B cell (primary cell): ENCODE measurements at regions of chr13 and their contacts with region 1.

Region 1: GRCh38 chr13:46595136-46595886 is 42.3 kb downstream of the LRCH1 start:
- DNase-seq: peak; percentile 80
- ATAC-seq: peak; percentile 72
- H3K4me3 ChIP-seq: peak overlapping the region in 4 of 5 experiments; percentile 9 to 53 (median 28)
- H3K4me3 Mint-ChIP-seq: peak overlapping the region; percentile 59
- H3K27ac ChIP-seq: peak overlapping the region; percentile 67 to 69
- H3K27ac Mint-ChIP-seq: peak overlapping the region; percentile 73
- H3K4me1 ChIP-seq: peaks cover 96 to 97% of the 10 kb centered on the region in 2 donors
- H3K4me1 Mint-ChIP-seq: peaks cover 93% of the 10 kb centered on the region
- H3K27me3 ChIP-seq: no peaks in the 10 kb centered on the region
- H3K27me3 Mint-ChIP-seq: no peaks in the 10 kb centered on the region
- CTCF ChIP-seq: no peak

Region 2: DNA sequence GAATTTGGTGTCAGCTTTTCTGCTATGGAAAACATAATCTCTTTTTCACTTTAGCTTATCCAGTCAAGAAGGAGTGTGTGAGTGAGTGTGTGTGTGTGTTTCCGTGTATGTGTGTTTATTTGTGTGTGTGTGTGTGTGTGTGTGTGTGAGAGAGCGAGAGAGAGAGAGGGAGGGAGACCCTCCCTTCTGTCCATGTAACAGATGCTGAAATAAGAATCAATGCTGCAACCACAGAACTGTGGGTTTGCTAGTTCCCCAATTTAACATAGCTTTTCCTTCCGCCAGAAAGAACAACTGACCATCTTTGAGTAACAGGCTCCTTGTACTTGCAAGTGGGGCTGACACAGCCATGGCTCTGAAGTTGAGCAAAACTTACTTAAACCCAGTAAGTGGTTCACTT is 418.6 kb before region 1 on chr13:
- CTCF ChIA-PET with region 1: no interaction called
- POLR2A ChIA-PET with region 1: no interaction called
- intact Hi-C with region 1: loop called (anchors 10 kb)
- DNase-seq: peak; percentile 83
- ATAC-seq: peak; percentile 61
- H3K4me3 ChIP-seq: peak overlapping the region; percentile 22 to 99 (median 39)
- H3K4me3 Mint-ChIP-seq: peak overlapping the region; percentile 80
- H3K27ac ChIP-seq: peak overlapping the region; percentile 79 to 91
- H3K27ac Mint-ChIP-seq: peak overlapping the region; percentile 90
- H3K4me1 ChIP-seq: peaks cover 68 to 71% of the 10 kb centered on the region in 2 donors
- H3K4me1 Mint-ChIP-seq: peaks cover 73% of the 10 kb centered on the region
- H3K27me3 ChIP-seq: no peaks in the 10 kb centered on the region
- H3K27me3 Mint-ChIP-seq: no peaks in the 10 kb centered on the region
- CTCF ChIP-seq: no peak

Region 3: GRCh38 chr13:46382224-46382623 is 213.1 kb before region 1 on chr13:
- CTCF ChIA-PET with region 1: no interaction called
- POLR2A ChIA-PET with region 1: no interaction called
- intact Hi-C with region 1: loop called (anchors 5 kb)
- DNase-seq: peak; percentile 77
- ATAC-seq: peak; percentile 46
- H3K4me3 ChIP-seq: peak overlapping the region; percentile 14 to 90 (median 74)
- H3K4me3 Mint-ChIP-seq: peak overlapping the region; percentile 73
- H3K27ac ChIP-seq: peak overlapping the region; percentile 84 to 97
- H3K27ac Mint-ChIP-seq: peak overlapping the region; percentile 90
- H3K4me1 ChIP-seq: peaks cover 66 to 72% of the 10 kb centered on the region in 2 donors
- H3K4me1 Mint-ChIP-seq: peaks cover 60% of the 10 kb centered on the region
- H3K27me3 ChIP-seq: no peaks in the 10 kb centered on the region
- H3K27me3 Mint-ChIP-seq: no peaks in the 10 kb centered on the region
- CTCF ChIP-seq: no peak

Region 4: DNA sequence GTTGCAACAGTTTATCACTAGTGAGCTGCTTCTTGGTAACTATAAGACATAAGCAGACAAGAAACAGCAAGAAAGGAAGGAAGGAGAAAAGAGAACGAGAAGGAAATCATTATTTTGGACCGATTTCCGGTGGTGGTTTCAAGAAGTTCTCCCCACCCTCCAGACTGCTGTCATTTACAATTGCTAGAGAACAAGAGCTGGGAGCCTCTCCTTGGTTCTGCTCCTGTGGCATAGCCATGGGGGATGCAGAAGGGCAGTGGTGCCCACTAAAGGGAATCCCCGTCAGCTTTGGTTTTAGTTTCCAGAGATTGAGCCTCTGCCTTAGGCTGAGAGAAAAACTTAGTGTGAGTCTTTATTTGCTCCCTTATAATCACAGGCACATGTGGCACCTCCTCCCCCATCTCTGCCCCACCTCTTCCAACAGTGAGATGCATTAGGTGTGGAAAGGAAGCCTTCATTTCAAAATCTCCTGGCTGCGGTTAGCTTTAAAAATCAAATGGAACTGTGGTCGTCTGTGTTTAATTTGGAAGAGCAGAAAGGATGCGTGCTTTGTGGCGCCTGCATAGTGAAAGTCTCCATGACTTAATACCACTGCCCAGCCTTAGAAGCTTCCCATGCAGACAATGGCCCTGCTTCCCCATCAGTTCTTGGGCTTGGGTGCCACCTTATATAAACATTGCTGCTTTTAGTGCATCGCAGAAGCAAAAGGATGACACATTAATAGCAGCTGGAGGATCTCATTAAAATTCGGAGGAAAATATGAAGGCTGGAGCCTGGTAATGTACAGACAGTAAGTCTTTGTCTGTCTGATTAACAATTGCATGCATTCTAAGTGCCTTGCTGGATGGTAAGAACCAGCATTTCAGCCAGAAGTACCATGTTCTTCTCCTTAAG is 17.4 kb before region 1 on chr13:
- CTCF ChIA-PET with region 1: interaction called, 7 read pairs
- POLR2A ChIA-PET with region 1: interaction called, 8 read pairs
- intact Hi-C with region 1: loop called (anchors 2 kb)
- DNase-seq: peak; percentile 47
- ATAC-seq: peak; percentile 25
- H3K4me3 ChIP-seq: peak overlapping the region in 1 of 5 experiments; percentile 45
- H3K4me3 Mint-ChIP-seq: peak overlapping the region; percentile 61
- H3K27ac ChIP-seq: peak overlapping the region; percentile 43 to 68
- H3K27ac Mint-ChIP-seq: peak overlapping the region; percentile 73
- H3K4me1 ChIP-seq: peaks cover 72 to 75% of the 10 kb centered on the region in 2 donors
- H3K4me1 Mint-ChIP-seq: peaks cover 86% of the 10 kb centered on the region
- H3K27me3 ChIP-seq: no peaks in the 10 kb centered on the region
- H3K27me3 Mint-ChIP-seq: no peaks in the 10 kb centered on the region
- CTCF ChIP-seq: no peak

Region 5: GRCh38 chr13:46605825-46606554 is 10.7 kb after region 1 on chr13:
- CTCF ChIA-PET with region 1: interaction called, 3 read pairs
- POLR2A ChIA-PET with region 1: interaction called, 4 read pairs
- intact Hi-C with region 1: loop called (anchors 1 kb)
- DNase-seq: peak; percentile 72
- ATAC-seq: peak; percentile 44
- H3K4me3 ChIP-seq: peak overlapping the region in 1 of 5 experiments; percentile 18
- H3K4me3 Mint-ChIP-seq: peak overlapping the region; percentile 66
- H3K27ac ChIP-seq: peak overlapping the region; percentile 26 to 74
- H3K27ac Mint-ChIP-seq: peak overlapping the region; percentile 79
- H3K4me1 ChIP-seq: peaks cover 76 to 80% of the 10 kb centered on the region in 2 donors
- H3K4me1 Mint-ChIP-seq: peaks cover 89% of the 10 kb centered on the region
- H3K27me3 ChIP-seq: no peaks in the 10 kb centered on the region
- H3K27me3 Mint-ChIP-seq: no peaks in the 10 kb centered on the region
- CTCF ChIP-seq: no peak

Region 6: DNA sequence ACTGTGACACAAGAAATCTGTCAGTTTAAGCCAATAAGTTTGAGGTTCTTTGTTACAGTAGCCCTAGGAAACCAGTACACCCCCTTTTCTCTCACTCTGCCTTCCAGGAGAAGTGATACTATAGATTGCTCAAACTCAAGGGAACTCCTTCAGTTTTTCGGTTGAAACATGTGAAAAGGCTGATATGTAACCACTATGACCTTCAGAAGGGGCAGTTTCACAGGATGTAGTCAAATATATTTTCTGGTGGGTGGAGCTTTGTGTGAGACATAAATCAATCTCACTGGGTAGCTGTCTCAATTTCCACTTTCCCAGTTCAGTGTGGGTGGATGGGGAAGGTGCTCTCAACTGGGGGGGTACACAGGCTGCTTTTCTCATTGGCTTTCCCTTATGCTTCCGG is 259.9 kb after region 1 on chr13:
- CTCF ChIA-PET with region 1: no interaction called
- POLR2A ChIA-PET with region 1: no interaction called
- intact Hi-C with region 1: no loop called
- DNase-seq: no peak
- ATAC-seq: no peak
- H3K4me3 ChIP-seq: no peak overlapping the region
- H3K4me3 Mint-ChIP-seq: no peak overlapping the region
- H3K27ac ChIP-seq: no peak overlapping the region
- H3K27ac Mint-ChIP-seq: no peak overlapping the region
- H3K4me1 ChIP-seq: no peaks in the 10 kb centered on the region
- H3K4me1 Mint-ChIP-seq: no peaks in the 10 kb centered on the region
- H3K27me3 ChIP-seq: peaks cover 0 to 4% (median 0%) of the 10 kb centered on the region in 4 experiments
- H3K27me3 Mint-ChIP-seq: peaks cover 16% of the 10 kb centered on the region
- CTCF ChIP-seq: no peak

Region 7: DNA sequence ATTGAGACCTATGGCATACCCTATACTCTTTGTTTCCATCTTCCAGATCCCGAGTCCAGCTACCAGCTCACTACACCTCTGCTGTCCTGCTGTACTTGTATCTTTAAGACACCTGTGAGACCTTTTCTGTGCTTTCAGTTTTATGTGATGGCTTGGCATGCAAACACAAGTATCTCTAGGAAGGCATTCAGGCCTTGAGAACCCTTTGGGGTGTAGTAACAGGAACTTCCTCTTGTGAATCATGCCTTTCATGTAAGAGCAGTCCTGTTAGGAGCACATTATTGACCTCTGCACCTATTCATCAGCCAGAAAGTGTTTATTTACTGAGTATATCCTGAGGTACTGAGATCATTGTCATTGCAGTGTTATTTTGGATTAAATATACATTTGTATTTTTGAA is 388.6 kb after region 1 on chr13:
- CTCF ChIA-PET with region 1: no interaction called
- POLR2A ChIA-PET with region 1: no interaction called
- intact Hi-C with region 1: loop called (anchors 5 kb)
- DNase-seq: peak; percentile 69
- ATAC-seq: peak; percentile 51
- H3K4me3 ChIP-seq: peak overlapping the region in 2 of 5 experiments; percentile 12 to 52
- H3K4me3 Mint-ChIP-seq: peak overlapping the region; percentile 82
- H3K27ac ChIP-seq: peak overlapping the region; percentile 33 to 44
- H3K27ac Mint-ChIP-seq: peak overlapping the region; percentile 84
- H3K4me1 ChIP-seq: peaks cover 25 to 26% of the 10 kb centered on the region in 2 donors
- H3K4me1 Mint-ChIP-seq: peaks cover 26% of the 10 kb centered on the region
- H3K27me3 ChIP-seq: no peaks in the 10 kb centered on the region
- H3K27me3 Mint-ChIP-seq: peaks cover 2% of the 10 kb centered on the region
- CTCF ChIP-seq: no peak